ENCODE measurements at regions of chr3 and their contacts with region 1.

Region 1: GRCh38 chr3:43246976-43247375 is 39.4 kb upstream of the SNRK start:
- DNase-seq: no peak
- ATAC-seq: no peak

Region 2: GRCh38 chr3:43286841-43287499 is 40.0 kb after region 1 on chr3:
- intact Hi-C with region 1: loop called (anchors 2 kb)
- DNase-seq: no peak
- ATAC-seq: no peak

Measured in sciatic nerve (tissue), 2 donors.